ENCODE measurements at regions of chr12 and their contacts with region 1.

Region 1: GRCh38 chr12:122980183-122981046 is at the start of gene ARL6IP4:
- DNase-seq: peak in 4 of 7 donors; percentile 54 to 60 (median 58)
- H3K4me3 ChIP-seq: peak within 1 kb of the TSS; percentile 37 to 83 (median 64)
- H3K27ac ChIP-seq: peak within 1 kb of the TSS; percentile 17 to 90 (median 79)
- H3K4me1 ChIP-seq: peaks cover 54 to 78% of the 10 kb centered on the region in 2 donors
- H3K27me3 ChIP-seq: no peaks in the 10 kb centered on the region
- CTCF ChIP-seq: no peak
- POLR2A ChIP-seq: peak in 1 of 2 donors; percentile 69
- total RNA-seq, gene ARL6IP4: 192 to 384 (median 285) TPM

Region 2: GRCh38 chr12:123150744-123151456 is 170.5 kb after region 1 on chr12 and contains the start of gene PITPNM2:
- intact Hi-C with region 1: loop called in 1 of 2 experiments (anchors 5 kb)
- DNase-seq: peak; percentile 43 to 70 (median 62)
- H3K4me3 ChIP-seq: peak within 1 kb of the TSS; percentile 22 to 84 (median 54)
- H3K27ac ChIP-seq: peak within 1 kb of the TSS; percentile 41 to 96 (median 90)
- H3K4me1 ChIP-seq: peaks cover 11 to 37% of the 10 kb centered on the region in 2 donors
- H3K27me3 ChIP-seq: no peaks in the 10 kb centered on the region
- CTCF ChIP-seq: peak in 3 of 6 experiments; percentile 18 to 70 (median 30)
- POLR2A ChIP-seq: peak; percentile 5 to 23
- total RNA-seq, gene PITPNM2: 3.7 to 57.4 (median 25.6) TPM

Region 3: DNA sequence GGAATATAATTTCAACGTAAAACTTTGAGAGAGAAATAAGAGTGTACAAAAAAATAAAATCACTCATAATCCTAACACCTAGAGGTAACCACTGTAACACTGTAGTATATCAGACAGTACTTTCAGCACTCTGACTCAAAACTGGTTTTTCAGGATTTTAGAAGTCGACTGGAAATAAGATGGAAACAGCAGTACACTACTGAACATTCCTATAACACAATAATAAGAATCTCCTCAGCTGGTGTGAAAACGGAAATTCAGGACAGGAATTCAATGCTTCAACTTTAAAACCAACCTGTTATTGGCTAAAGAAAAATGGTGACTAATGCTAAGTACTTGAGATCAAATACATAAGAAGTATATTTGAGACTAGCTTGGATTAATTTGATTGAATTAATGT is 182.8 kb after region 1 on chr12:
- intact Hi-C with region 1: loop called in 1 of 2 experiments (anchors 5 kb)
- DNase-seq: no peak
- H3K4me3 ChIP-seq: no peak overlapping the region
- H3K27ac ChIP-seq: no peak overlapping the region
- H3K4me1 ChIP-seq: no peaks in the 10 kb centered on the region
- H3K27me3 ChIP-seq: no peaks in the 10 kb centered on the region
- CTCF ChIP-seq: no peak
- POLR2A ChIP-seq: no peak

Region 4: DNA sequence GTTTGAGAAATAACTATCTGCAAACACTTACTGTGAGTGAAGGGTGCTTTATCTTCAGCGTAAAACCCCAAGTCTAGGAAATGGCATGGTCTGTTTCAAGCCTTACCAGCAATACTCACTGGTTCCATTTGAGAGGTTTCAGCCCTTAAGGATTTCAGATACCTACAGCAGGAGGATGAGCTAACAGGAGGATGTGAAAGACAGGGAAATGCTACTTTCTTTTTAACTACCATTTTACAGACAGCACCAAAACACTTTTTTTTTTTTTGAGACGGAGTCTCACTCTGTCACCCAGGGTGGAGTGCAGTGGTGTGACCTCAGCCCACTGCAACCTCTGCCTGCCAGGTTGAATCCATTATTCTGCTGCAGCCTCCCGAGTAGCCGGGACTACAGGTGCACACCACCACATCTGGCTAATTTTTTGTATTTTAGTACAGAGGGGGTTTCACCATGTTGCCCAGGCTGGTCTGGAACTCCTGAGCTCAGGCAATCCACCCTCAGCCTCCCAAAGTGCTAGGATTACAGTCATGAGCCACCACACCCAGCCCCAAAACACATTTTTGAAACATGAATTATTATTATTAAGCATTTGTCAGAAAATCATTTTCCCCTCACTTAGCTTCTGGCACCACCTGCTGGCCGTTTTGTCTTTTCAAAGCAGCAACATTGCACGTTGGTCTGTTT is 257.4 kb after region 1 on chr12:
- intact Hi-C with region 1: loop called (anchors 5 kb)
- DNase-seq: peak; percentile 65 to 85 (median 76)
- H3K4me3 ChIP-seq: no peak overlapping the region
- H3K27ac ChIP-seq: peak overlapping the region in 1 of 5 donors; percentile 24
- H3K4me1 ChIP-seq: peaks cover 14 to 28% of the 10 kb centered on the region in 2 donors
- H3K27me3 ChIP-seq: no peaks in the 10 kb centered on the region
- CTCF ChIP-seq: peak; percentile 74 to 84 (median 76)
- POLR2A ChIP-seq: no peak